ENCODE measurements at regions of chr19 and their contacts with region 1.

Region 1: GRCh38 chr19:16111160-16111908 is at the start of gene RAB8A:
- DNase-seq: peak; percentile 97 to 100 (median 98)
- H3K4me3 ChIP-seq: peak within 1 kb of the TSS; percentile 60 to 97 (median 89)
- H3K27ac ChIP-seq: peak within 1 kb of the TSS in 58 of 59 donors; percentile 21 to 96 (median 88)
- H3K27me3 ChIP-seq: no peaks in the 10 kb centered on the region
- CTCF ChIP-seq: peak; percentile 89 to 100 (median 98)
- total RNA-seq, gene RAB8A: 21.7 to 52.7 (median 32.7) TPM

Region 2: GRCh38 chr19:16076154-16076957 is 35.0 kb before region 1 on chr19 and contains the start of gene TPM4:
- intact Hi-C with region 1: loop called (anchors 1 kb)
- DNase-seq: peak; percentile 64 to 92 (median 86)
- H3K4me3 ChIP-seq: peak within 1 kb of the TSS; percentile 66 to 96 (median 88)
- H3K27ac ChIP-seq: peak within 1 kb of the TSS; percentile 84 to 100 (median 98)
- H3K27me3 ChIP-seq: no peaks in the 10 kb centered on the region
- CTCF ChIP-seq: peak in 4 of 56 donors; percentile 5 to 49 (median 12)
- total RNA-seq, gene TPM4: 76.8 to 148 (median 102) TPM

Region 3: GRCh38 chr19:16160943-16161560 is 49.7 kb after region 1 on chr19:
- intact Hi-C with region 1: no loop called
- DNase-seq: no peak
- H3K4me3 ChIP-seq: no peak overlapping the region
- H3K27ac ChIP-seq: peak overlapping the region in 5 of 59 donors; percentile 11 to 55 (median 27)
- H3K27me3 ChIP-seq: no peaks in the 10 kb centered on the region
- CTCF ChIP-seq: no peak

Region 4: DNA sequence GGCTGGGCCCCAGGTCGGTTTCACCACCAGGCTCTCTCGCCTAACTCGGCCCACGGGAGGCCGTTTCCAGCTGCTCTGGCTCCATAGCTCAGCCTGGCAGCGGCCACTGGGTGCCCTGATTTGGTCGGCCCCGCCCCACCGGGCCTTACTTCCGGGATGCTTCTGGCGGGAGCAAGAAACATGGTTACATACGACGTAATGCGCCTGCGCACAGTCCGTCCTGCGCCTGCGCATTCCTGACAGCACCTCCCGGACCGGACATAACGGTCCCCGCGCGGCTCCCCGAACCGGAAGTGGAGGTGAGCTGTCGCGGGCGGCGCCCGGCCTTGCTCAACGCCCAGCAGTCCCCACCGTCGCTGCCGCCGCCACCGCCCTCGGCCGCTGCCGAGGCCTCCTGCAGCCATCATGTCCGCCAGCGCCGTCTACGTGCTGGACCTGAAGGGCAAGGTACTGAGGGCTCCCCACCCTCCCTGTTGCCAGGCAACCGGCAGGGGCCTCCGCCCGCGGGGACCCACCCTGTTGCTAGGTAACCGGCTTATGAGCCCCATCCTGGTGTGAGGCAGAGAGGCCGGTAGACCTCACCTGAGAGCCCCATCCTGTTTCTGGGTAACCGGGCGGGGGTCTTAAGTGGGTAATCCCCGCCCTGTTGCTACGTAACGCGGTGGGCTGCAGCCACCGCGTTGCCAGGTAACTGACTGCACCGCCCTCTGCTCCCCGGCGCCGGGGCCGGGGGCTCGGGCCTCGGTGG is 86.5 kb after region 1 on chr19 and contains the start of gene AP1M1:
- intact Hi-C with region 1: loop called in 1 of 2 experiments (anchors 5 kb)
- DNase-seq: peak; percentile 93 to 98 (median 97)
- H3K4me3 ChIP-seq: peak within 1 kb of the TSS; percentile 75 to 100 (median 97)
- H3K27ac ChIP-seq: peak within 1 kb of the TSS; percentile 41 to 93 (median 84)
- H3K27me3 ChIP-seq: no peaks in the 10 kb centered on the region
- CTCF ChIP-seq: peak in 33 of 56 donors; percentile 9 to 60 (median 34)
- total RNA-seq, gene AP1M1: 83.0 to 150 (median 106) TPM

Region 5: GRCh38 chr19:16233836-16234551 is 122.7 kb after region 1 on chr19:
- intact Hi-C with region 1: no loop called
- DNase-seq: no peak
- H3K4me3 ChIP-seq: no peak overlapping the region
- H3K27ac ChIP-seq: peak overlapping the region in 1 of 59 donors; percentile 25
- H3K27me3 ChIP-seq: no peaks in the 10 kb centered on the region
- CTCF ChIP-seq: no peak

Measured in dorsolateral prefrontal cortex (tissue), 120 donors.